GM12878 (cell line): ENCODE measurements at regions of chr2 and their contacts with region 1.

Region 1: DNA sequence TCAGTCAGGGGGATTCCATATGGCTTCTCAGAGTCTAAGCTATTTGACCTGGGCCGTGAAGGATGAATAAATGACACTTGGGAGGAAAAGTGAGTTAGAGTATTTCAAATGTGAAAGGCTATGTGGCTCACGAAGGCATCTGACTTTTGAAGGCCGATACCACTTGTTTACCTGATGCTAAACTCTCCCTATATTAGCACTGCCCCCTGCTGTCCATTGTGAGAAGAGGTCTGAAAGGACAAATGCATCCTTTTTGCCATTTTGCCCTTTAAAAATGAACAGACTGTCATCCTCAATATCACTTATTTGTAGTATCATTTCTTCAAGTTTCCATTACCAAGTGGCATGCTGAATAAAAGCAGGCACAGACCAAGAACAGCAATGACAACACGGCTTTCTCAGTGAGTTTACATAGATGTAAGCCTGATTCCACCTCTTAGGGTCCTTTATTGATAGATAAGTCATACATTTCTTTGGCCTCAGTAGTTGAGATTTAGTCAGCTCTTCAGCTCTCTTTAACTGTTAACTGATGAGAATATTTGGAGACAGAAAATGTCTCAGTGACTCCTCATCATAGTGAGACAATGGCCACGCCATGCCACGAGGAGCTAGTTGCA is 40.1 kb downstream of the DOCK10 start:
- DNase-seq: peak; percentile 60
- ATAC-seq: peak; percentile 85
- H3K4me3 ChIP-seq: no peak overlapping the region
- H3K27ac ChIP-seq: no peak overlapping the region
- H3K4me1 ChIP-seq: peaks cover 13% of the 10 kb centered on the region; the same call in 1 of the 2 replicates
- H3K27me3 ChIP-seq: no peaks in the 10 kb centered on the region
- CTCF ChIP-seq: peak; percentile 76 to 83 (median 77)
- EP300 ChIP-seq: no peak
- POLR2A ChIP-seq: no peak
- RAD21 ChIP-seq: peak; percentile 95

Region 2: GRCh38 chr2:224802407-224802806 is 199.7 kb before region 1 on chr2:
- CTCF ChIA-PET with region 1: interaction called, 7 read pairs
- POLR2A ChIA-PET with region 1: no interaction called
- RAD21 ChIA-PET with region 1: interaction called, 3 read pairs
- SMC1A ChIA-PET with region 1: interaction called, 3 read pairs
- in situ Hi-C with region 1: no loop called
- intact Hi-C with region 1: loop called (anchors 10 kb)
- DNase-seq: no peak
- ATAC-seq: no peak
- H3K4me3 ChIP-seq: no peak overlapping the region
- H3K27ac ChIP-seq: no peak overlapping the region
- H3K4me1 ChIP-seq: no peaks in the 10 kb centered on the region
- H3K27me3 ChIP-seq: no peaks in the 10 kb centered on the region
- CTCF ChIP-seq: no peak
- EP300 ChIP-seq: no peak
- POLR2A ChIP-seq: no peak
- RAD21 ChIP-seq: no peak

Region 3: DNA sequence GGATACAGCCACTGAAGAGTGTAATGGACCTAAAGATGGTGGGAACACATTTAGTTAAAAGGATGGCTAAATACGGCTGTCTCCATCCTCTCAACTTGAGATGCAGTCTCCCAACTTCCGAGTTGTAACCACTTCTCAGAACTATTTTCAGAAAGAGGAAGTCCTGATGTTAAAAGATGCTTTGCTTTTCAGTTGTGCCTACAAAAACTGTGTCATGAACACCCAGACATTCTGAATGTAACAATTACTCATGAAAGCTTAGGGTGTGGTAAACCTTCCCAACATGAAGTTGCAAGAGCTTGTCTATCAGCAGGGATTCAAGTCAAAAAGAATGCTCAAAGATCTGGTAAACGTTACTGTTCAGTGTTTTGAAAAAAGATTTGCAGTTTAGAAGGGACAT is 107.8 kb before region 1 on chr2:
- CTCF ChIA-PET with region 1: interaction called, 13 read pairs
- POLR2A ChIA-PET with region 1: no interaction called
- RAD21 ChIA-PET with region 1: interaction called, 4 read pairs
- SMC1A ChIA-PET with region 1: interaction called, 5 read pairs
- in situ Hi-C with region 1: no loop called
- intact Hi-C with region 1: loop called (anchors 2 kb)
- DNase-seq: peak; percentile 71
- ATAC-seq: peak; percentile 90
- H3K4me3 ChIP-seq: peak overlapping the region; percentile 13; the same call in 1 of the 2 replicates
- H3K27ac ChIP-seq: peak overlapping the region; percentile 88
- H3K4me1 ChIP-seq: peaks cover 40% of the 10 kb centered on the region
- H3K27me3 ChIP-seq: no peaks in the 10 kb centered on the region
- CTCF ChIP-seq: no peak
- EP300 ChIP-seq: no peak
- POLR2A ChIP-seq: no peak
- RAD21 ChIP-seq: no peak

Region 4: GRCh38 chr2:224938651-224939182 is 63.4 kb before region 1 on chr2:
- CTCF ChIA-PET with region 1: interaction called, 118 read pairs
- POLR2A ChIA-PET with region 1: no interaction called
- RAD21 ChIA-PET with region 1: interaction called, 13 read pairs
- SMC1A ChIA-PET with region 1: interaction called, 27 read pairs
- in situ Hi-C with region 1: loop called (anchors 5 kb)
- intact Hi-C with region 1: no loop called
- DNase-seq: no peak
- ATAC-seq: peak; percentile 64
- H3K4me3 ChIP-seq: peak overlapping the region; percentile 62
- H3K27ac ChIP-seq: peak overlapping the region; percentile 88
- H3K4me1 ChIP-seq: peaks cover 31% of the 10 kb centered on the region
- H3K27me3 ChIP-seq: no peaks in the 10 kb centered on the region
- CTCF ChIP-seq: no peak
- EP300 ChIP-seq: peak; percentile 37 to 52; a peak in 2 of 4 replicates
- POLR2A ChIP-seq: no peak
- RAD21 ChIP-seq: no peak

Region 5: GRCh38 chr2:224982910-224983711 is 19.0 kb before region 1 on chr2:
- CTCF ChIA-PET with region 1: interaction called, 10 read pairs
- POLR2A ChIA-PET with region 1: no interaction called
- RAD21 ChIA-PET with region 1: no interaction called
- SMC1A ChIA-PET with region 1: interaction called, 11 read pairs
- in situ Hi-C with region 1: no loop called
- intact Hi-C with region 1: no loop called
- DNase-seq: peak; percentile 61
- ATAC-seq: peak; percentile 85
- H3K4me3 ChIP-seq: peak overlapping the region; percentile 9
- H3K27ac ChIP-seq: peak overlapping the region; percentile 60
- H3K4me1 ChIP-seq: peaks cover 21% of the 10 kb centered on the region
- H3K27me3 ChIP-seq: no peaks in the 10 kb centered on the region
- CTCF ChIP-seq: no peak
- EP300 ChIP-seq: no peak
- POLR2A ChIP-seq: no peak
- RAD21 ChIP-seq: no peak

Region 6: GRCh38 chr2:225122583-225123486 is 120.7 kb after region 1 on chr2:
- CTCF ChIA-PET with region 1: interaction called, 5 read pairs
- POLR2A ChIA-PET with region 1: no interaction called
- RAD21 ChIA-PET with region 1: interaction called, 4 read pairs
- SMC1A ChIA-PET with region 1: interaction called, 13 read pairs
- in situ Hi-C with region 1: no loop called
- intact Hi-C with region 1: no loop called
- DNase-seq: no peak
- ATAC-seq: peak; percentile 59
- H3K4me3 ChIP-seq: no peak overlapping the region
- H3K27ac ChIP-seq: no peak overlapping the region
- H3K4me1 ChIP-seq: no peaks in the 10 kb centered on the region
- H3K27me3 ChIP-seq: no peaks in the 10 kb centered on the region; a peak in 1 of 4 replicates
- CTCF ChIP-seq: peak; percentile 42 to 63 (median 57); a peak in 5 of 6 replicates
- EP300 ChIP-seq: no peak
- POLR2A ChIP-seq: no peak
- RAD21 ChIP-seq: peak; percentile 77